HCT116 (cell line): ENCODE measurements at regions of chr4 and their contacts with region 1.

Region 1: GRCh38 chr4:134465417-134465816 is 263.8 kb upstream of the PABPC4L start:
- DNase-seq: no peak
- ATAC-seq: no peak
- H3K4me3 ChIP-seq: no peak overlapping the region
- H3K27ac ChIP-seq: no peak overlapping the region
- H3K4me1 ChIP-seq: no peaks in the 10 kb centered on the region
- H3K27me3 ChIP-seq: no peaks in the 10 kb centered on the region
- CTCF ChIP-seq: no peak
- POLR2A ChIP-seq: no peak
- RAD21 ChIP-seq: peak; percentile 26

Region 2: DNA sequence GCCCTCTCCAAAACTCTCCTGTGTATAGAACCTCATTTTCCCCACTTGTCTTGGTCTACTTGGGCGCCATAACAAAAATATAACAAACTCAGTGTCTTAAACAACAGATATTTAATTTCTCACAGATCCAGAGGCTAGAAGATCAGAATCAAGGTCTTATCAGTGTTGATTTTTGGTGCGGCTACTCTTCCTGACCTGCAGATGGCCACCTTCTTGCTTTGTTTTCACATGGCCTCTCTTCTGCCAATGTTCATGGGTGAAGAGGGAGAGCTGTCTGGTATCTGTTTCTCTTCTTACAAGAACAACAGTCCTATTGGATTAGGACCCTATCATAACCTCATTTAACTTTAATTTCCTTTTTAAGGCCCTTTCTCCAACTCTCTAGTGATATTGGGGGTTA is 441.2 kb before region 1 on chr4:
- CTCF ChIA-PET with region 1: interaction called, 3 read pairs
- POLR2A ChIA-PET with region 1: no interaction called
- RAD21 ChIA-PET with region 1: no interaction called
- intact Hi-C with region 1: loop called (anchors 10 kb)
- DNase-seq: peak; percentile 34
- ATAC-seq: peak; percentile 79
- H3K4me3 ChIP-seq: no peak overlapping the region
- H3K27ac ChIP-seq: no peak overlapping the region
- H3K4me1 ChIP-seq: 0 out of 4 replicates have a peak, but pooled peaks cover 0 to 4% of the 10 kb centered on the region in 2 experiments
- H3K27me3 ChIP-seq: no peaks in the 10 kb centered on the region
- CTCF ChIP-seq: peak; percentile 23 to 56 (median 53); a peak in 5 of 6 replicates
- POLR2A ChIP-seq: no peak
- RAD21 ChIP-seq: peak; percentile 48